ENCODE measurements at regions of chr2 and their contacts with region 1.

Region 1: DNA sequence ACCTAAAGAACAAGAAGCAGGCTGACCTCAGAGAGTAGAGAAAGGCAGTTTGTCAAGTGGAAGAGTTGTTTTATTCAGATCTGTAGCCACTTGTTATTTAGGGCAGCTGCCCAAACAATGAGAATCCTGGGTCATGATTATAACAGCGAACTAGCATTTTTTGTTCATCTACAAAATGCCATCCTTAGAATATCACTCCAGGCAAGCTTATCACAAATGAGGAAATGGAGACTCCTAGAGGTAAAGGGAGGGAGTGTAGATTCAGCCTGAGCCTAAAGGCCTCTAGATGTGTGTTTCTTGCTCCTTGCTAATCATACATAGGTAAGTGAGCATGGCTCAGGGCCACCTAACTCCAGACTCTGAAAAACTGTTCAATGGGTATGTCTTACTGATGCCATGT is 126.1 kb downstream of the HNMT start:
- DNase-seq: peak; percentile 76
- H3K4me3 ChIP-seq: no peak overlapping the region
- H3K27ac ChIP-seq: no peak overlapping the region
- H3K4me1 ChIP-seq: no peaks in the 10 kb centered on the region
- H3K27me3 ChIP-seq: no peaks in the 10 kb centered on the region
- CTCF ChIP-seq: peak; percentile 53 to 70
- POLR2A ChIP-seq: no peak

Region 2: DNA sequence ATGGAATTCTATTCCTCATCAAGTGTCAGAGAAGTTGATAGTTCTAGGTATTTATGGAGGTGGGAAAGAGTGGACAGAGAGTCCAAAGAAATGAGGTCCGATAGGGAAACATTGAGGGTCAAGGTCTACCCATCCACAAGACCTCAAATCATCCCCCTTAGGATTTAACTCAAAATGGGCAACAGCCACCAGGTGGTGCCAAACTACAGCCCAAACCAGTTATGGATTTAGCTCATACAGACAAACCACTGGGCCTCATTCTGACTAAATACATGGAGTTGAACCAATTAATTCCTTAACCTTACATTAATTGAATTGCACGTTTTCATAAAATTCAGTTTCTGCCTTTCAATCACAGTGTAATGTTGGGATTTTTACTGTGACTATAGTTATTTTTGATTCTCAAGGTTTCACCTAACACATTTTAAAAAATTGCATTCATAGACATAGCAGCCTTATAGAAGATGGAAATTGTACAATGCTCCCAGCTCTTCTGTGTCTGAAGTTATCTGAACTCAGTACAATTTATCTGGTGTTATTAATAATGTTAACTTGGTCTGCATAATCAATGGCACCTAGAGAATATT is 224.3 kb before region 1 on chr2:
- CTCF ChIA-PET with region 1: interaction called, 21 read pairs
- POLR2A ChIA-PET with region 1: no interaction called
- dilution Hi-C with region 1: no loop called
- intact Hi-C with region 1: loop called (anchors 1 kb)
- DNase-seq: peak; percentile 53
- H3K4me3 ChIP-seq: no peak overlapping the region
- H3K27ac ChIP-seq: no peak overlapping the region
- H3K4me1 ChIP-seq: no peaks in the 10 kb centered on the region
- H3K27me3 ChIP-seq: peaks cover 0 to 3% of the 10 kb centered on the region in 2 experiments
- CTCF ChIP-seq: peak; percentile 57 to 63
- POLR2A ChIP-seq: no peak

Region 3: DNA sequence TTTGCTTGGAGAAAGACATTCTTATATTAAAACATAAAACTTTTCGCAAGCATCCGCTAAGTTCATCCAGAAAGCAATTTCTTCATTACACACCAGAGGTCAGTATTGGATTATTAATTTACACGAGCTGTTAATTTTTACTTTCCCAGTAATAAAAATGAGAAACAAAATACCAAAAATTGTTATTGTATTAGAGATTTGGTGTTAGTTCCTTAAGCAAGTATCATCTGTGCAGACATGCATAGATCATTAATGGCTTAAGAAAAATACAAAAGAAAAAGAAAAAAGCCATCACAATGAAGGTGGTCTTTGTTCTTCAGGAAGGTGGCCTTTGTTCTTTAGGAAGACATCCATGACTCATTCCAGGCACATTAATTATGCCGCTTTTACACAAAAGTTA is 179.7 kb before region 1 on chr2:
- CTCF ChIA-PET with region 1: interaction called, 63 read pairs
- POLR2A ChIA-PET with region 1: no interaction called
- dilution Hi-C with region 1: no loop called
- intact Hi-C with region 1: loop called (anchors 1 kb)
- DNase-seq: peak; percentile 52
- H3K4me3 ChIP-seq: no peak overlapping the region
- H3K27ac ChIP-seq: no peak overlapping the region
- H3K4me1 ChIP-seq: peaks cover 4% of the 10 kb centered on the region
- H3K27me3 ChIP-seq: peaks cover 0 to 3% of the 10 kb centered on the region in 2 experiments
- CTCF ChIP-seq: peak; percentile 26
- POLR2A ChIP-seq: no peak

Region 4: GRCh38 chr2:137947728-137948336 is 142.5 kb before region 1 on chr2:
- CTCF ChIA-PET with region 1: interaction called, 103 read pairs
- POLR2A ChIA-PET with region 1: no interaction called
- dilution Hi-C with region 1: no loop called
- intact Hi-C with region 1: loop called (anchors 1 kb)
- DNase-seq: peak; percentile 82
- H3K4me3 ChIP-seq: no peak overlapping the region
- H3K27ac ChIP-seq: no peak overlapping the region
- H3K4me1 ChIP-seq: no peaks in the 10 kb centered on the region
- H3K27me3 ChIP-seq: no peaks in the 10 kb centered on the region
- CTCF ChIP-seq: peak; percentile 45 to 62
- POLR2A ChIP-seq: no peak

Region 5: GRCh38 chr2:138042311-138042710 is 48.0 kb before region 1 on chr2:
- CTCF ChIA-PET with region 1: no interaction called
- POLR2A ChIA-PET with region 1: no interaction called
- dilution Hi-C with region 1: no loop called
- intact Hi-C with region 1: no loop called
- DNase-seq: no peak
- H3K4me3 ChIP-seq: no peak overlapping the region
- H3K27ac ChIP-seq: no peak overlapping the region
- H3K4me1 ChIP-seq: no peaks in the 10 kb centered on the region
- H3K27me3 ChIP-seq: peaks cover 0 to 4% of the 10 kb centered on the region in 2 experiments
- CTCF ChIP-seq: no peak
- POLR2A ChIP-seq: no peak

Region 6: GRCh38 chr2:138787053-138787666 is 696.8 kb after region 1 on chr2:
- CTCF ChIA-PET with region 1: interaction called, 10 read pairs
- POLR2A ChIA-PET with region 1: no interaction called
- dilution Hi-C with region 1: no loop called
- intact Hi-C with region 1: loop called (anchors 2 kb)
- DNase-seq: peak; percentile 52
- H3K4me3 ChIP-seq: no peak overlapping the region
- H3K27ac ChIP-seq: no peak overlapping the region
- H3K4me1 ChIP-seq: no peaks in the 10 kb centered on the region
- H3K27me3 ChIP-seq: peaks cover 9 to 11% of the 10 kb centered on the region in 2 experiments
- CTCF ChIP-seq: peak; percentile 32 to 47
- POLR2A ChIP-seq: no peak

Measured in endothelial cell of umbilical vein (primary cell).